ENCODE measurements at regions of chr3 and their contacts with region 1.

Region 1: DNA sequence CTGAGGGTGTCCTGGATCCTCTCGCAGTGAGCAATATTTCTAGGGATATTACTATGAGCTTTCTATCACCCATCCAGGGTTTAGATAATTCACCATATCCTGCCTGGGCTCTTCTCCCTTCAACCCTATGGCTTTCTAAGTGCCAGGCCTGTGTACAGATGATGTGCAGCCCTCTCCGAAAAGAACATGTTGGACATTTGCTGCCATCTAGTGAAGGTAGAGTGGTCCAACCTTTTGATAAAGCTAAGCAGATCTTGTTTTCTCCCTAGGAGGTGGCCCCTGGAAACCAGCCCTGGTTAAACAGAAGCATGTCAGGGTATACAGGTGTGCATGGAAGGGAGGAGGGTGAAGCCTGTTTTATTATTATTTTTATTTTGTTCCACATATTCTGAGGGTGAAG is 27.9 kb upstream of the SCN10A start:
- DNase-seq: no peak
- H3K4me3 Mint-ChIP-seq: no peak overlapping the region
- H3K27ac Mint-ChIP-seq: no peak overlapping the region
- H3K4me1 Mint-ChIP-seq: no peaks in the 10 kb centered on the region
- H3K27me3 Mint-ChIP-seq: peaks cover 27% of the 10 kb centered on the region

Region 2: DNA sequence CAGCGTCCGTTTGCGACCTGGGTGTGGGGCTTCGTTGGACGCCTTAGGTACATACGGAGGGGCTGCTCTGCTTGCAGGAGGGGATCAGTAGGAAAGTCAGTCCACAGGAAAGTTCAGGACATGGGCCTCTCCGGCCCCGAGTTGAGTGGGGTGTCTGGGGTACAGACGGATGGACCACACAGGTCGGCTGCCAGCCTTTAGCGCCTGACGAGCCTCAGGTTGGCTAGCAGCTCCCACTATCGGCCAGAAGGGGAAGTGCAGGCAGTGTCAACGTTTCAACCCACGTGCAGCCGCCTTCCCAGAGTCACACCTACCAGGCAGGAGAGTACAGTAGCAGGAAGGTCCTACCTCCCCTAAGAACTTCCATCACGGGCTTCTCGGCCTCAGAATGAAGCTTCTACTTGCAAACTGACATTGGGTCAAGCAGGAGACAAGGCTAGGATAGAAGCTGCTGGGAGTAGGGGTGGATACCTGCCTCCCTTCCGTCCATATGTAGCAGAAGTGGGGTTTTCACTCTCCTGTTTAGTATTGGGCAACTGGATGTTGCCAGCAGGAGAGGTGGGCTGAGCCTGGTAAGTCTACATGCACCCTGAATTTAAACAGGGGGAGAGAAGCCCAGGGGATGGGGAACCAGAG is 192.6 kb before region 1 on chr3:
- intact Hi-C with region 1: loop called (anchors 10 kb)
- DNase-seq: peak; percentile 58
- H3K4me3 Mint-ChIP-seq: no peak overlapping the region
- H3K27ac Mint-ChIP-seq: no peak overlapping the region
- H3K4me1 Mint-ChIP-seq: peaks cover 7% of the 10 kb centered on the region
- H3K27me3 Mint-ChIP-seq: peaks cover 20% of the 10 kb centered on the region

Region 3: DNA sequence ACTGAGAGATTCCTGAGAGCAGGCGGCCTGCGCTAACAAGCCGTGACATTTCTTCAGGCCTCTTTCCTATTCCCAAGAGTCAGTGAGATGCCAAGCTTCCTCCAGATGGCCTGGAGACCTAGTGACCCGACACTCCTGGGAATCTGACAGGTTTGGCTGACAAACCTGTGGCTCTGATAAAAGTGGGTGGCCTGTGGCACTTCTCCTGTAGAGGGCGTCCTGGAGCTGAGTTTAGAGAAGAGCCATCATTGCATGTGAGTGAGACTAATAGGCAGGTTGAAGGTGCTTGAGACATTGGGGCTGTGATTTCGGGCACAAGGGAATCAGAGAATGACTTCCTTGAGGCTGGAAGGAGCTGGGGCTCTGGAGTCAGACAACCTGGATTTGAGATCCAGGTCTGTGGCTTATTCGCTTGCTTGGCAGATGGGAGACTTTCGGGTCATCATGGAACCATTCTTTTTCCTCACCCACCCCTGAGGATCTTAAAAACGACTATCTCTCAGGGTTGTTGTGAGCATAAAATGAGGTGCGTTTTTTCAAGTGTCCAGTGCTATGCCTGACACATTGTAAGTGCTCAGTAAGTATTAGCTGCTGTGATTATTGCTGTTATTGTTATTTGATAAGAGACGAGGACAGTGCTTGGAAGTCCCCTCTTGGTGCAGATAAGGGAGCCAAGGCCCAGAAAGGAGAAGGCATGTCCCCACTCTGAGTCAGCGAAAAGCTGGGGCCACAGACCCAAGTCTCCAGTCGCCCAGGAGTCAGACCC is 105.1 kb before region 1 on chr3:
- intact Hi-C with region 1: loop called (anchors 2 kb)
- DNase-seq: no peak
- H3K4me3 Mint-ChIP-seq: no peak overlapping the region
- H3K27ac Mint-ChIP-seq: no peak overlapping the region
- H3K4me1 Mint-ChIP-seq: no peaks in the 10 kb centered on the region
- H3K27me3 Mint-ChIP-seq: peaks cover 12% of the 10 kb centered on the region

Measured in activated T-helper 2 cell treated with anti-CD3 and anti-CD28 coated beads, Interferon-gamma antibody, Interleukin-2, Interleukin-4, amounts not matched to agents 10 μg/mL and 5 μg/mL and 100 μg/mL, durations not matched to agents 14 hours and 24 hours and 36 hours (primary cell).